Dorsolateral prefrontal cortex (tissue), 120 donors: ENCODE measurements at regions of chr2 and their contacts with region 1.

Region 1: GRCh38 chr2:17827785-17828184 is 11.5 kb downstream of the MSGN1 start:
- DNase-seq: no peak
- H3K4me3 ChIP-seq: no peak overlapping the region
- H3K27ac ChIP-seq: no peak overlapping the region
- H3K27me3 ChIP-seq: peaks cover 0 to 7% (median 0%) of the 10 kb centered on the region in 45 donors
- CTCF ChIP-seq: no peak

Region 2: GRCh38 chr2:17719562-17720371 is 108.0 kb before region 1 on chr2:
- intact Hi-C with region 1: loop called in 1 of 2 experiments (anchors 2 kb)
- DNase-seq: no peak
- H3K4me3 ChIP-seq: no peak overlapping the region
- H3K27ac ChIP-seq: no peak overlapping the region
- H3K27me3 ChIP-seq: no peaks in the 10 kb centered on the region
- CTCF ChIP-seq: peak; percentile 68 to 90 (median 82)